Adrenal gland (tissue), 19 donors: ENCODE measurements at regions of chr5 and their contacts with region 1.

Region 1: DNA sequence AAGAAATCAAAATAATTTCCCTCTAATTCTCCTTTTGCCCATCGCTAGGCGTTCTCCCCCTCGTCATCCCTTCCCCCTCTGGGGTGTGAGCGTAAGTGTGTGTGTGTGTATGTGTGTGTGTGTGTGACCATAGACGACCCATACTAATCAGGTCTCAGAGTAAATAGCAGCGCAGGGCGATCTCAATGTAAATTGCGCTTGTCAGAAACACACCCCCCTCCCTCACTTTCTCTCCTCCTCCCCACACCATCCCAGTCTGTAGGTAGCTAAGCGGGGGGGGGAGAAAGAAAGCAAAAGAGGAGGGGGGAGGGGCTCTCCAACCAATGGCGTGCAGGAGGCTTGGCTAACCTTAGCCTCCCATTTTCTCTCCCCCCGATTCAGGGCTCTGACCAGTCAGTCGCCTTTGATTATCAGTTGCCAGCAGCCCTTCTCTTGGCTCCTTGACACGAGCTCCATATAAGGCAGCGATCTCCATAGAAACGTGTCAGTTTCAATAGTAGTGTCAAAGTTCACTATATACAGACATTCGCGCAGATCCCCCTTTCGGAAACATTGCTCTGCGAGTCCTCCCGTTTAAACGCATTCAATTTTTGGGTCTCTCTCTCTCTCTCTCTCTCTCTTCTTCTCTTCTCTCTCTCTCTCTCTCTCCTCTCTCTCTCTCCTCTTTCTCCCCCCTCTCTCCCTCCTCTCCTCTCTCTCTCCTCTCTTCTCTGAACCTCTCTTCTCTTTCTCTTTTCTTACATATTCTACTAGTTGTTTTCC is at the start of gene NR2F1:
- DNase-seq: peak; percentile 90 to 97 (median 95)
- H3K4me3 ChIP-seq: peak within 1 kb of the TSS in 3 of 4 donors; percentile 14 to 81 (median 55)
- H3K27ac ChIP-seq: peak within 1 kb of the TSS; percentile 17 to 93 (median 71)
- H3K4me1 ChIP-seq: peaks cover 0 to 30% of the 10 kb centered on the region in 2 donors
- H3K27me3 ChIP-seq: no peaks in the 10 kb centered on the region
- CTCF ChIP-seq: peak in 5 of 6 experiments; percentile 93 to 99 (median 97)
- POLR2A ChIP-seq: peak; percentile 32 to 54
- total RNA-seq, gene NR2F1: 29.1 to 195 (median 78.9) TPM

Region 2: DNA sequence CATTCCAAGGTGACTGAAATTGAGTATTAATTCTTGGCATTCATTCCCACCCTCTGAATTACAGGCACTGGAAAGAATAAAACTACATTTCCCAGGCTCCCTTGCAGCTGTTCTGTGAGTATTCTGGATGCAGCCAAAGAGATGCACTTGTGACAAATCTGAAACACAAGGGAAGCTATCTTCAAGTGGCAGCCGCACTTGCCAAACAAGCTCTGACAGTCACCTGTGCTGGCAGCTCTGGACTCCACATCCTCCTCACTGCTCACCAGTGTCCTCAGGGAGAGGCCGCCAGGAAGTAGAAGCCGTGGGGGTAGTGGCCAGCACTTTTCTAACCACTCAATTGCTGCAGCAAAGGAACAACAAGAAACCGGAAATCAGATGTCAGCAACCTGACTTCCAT is 276.9 kb before region 1 on chr5:
- intact Hi-C with region 1: no loop called
- DNase-seq: no peak
- H3K4me3 ChIP-seq: no peak overlapping the region
- H3K27ac ChIP-seq: no peak overlapping the region
- H3K4me1 ChIP-seq: no peaks in the 10 kb centered on the region
- H3K27me3 ChIP-seq: no peaks in the 10 kb centered on the region
- CTCF ChIP-seq: no peak
- POLR2A ChIP-seq: no peak

Region 3: GRCh38 chr5:93407454-93407853 is 175.4 kb before region 1 on chr5:
- intact Hi-C with region 1: loop called (anchors 10 kb)
- DNase-seq: no peak
- H3K4me3 ChIP-seq: no peak overlapping the region
- H3K27ac ChIP-seq: no peak overlapping the region
- H3K4me1 ChIP-seq: peaks cover 6 to 10% of the 10 kb centered on the region in 2 donors
- H3K27me3 ChIP-seq: no peaks in the 10 kb centered on the region
- CTCF ChIP-seq: no peak
- POLR2A ChIP-seq: no peak

Region 4: GRCh38 chr5:93512799-93513198 is 70.1 kb before region 1 on chr5:
- intact Hi-C with region 1: loop called in 1 of 2 experiments (anchors 5 kb)
- DNase-seq: no peak
- H3K4me3 ChIP-seq: no peak overlapping the region
- H3K27ac ChIP-seq: no peak overlapping the region
- H3K4me1 ChIP-seq: peaks cover 6 to 12% of the 10 kb centered on the region in 2 donors
- H3K27me3 ChIP-seq: no peaks in the 10 kb centered on the region
- CTCF ChIP-seq: no peak
- POLR2A ChIP-seq: no peak

Region 5: GRCh38 chr5:93789173-93790070 is 206.6 kb after region 1 on chr5:
- intact Hi-C with region 1: loop called in 1 of 2 experiments (anchors 10 kb)
- DNase-seq: no peak
- H3K4me3 ChIP-seq: no peak overlapping the region
- H3K27ac ChIP-seq: no peak overlapping the region
- H3K4me1 ChIP-seq: no peaks in the 10 kb centered on the region
- H3K27me3 ChIP-seq: no peaks in the 10 kb centered on the region
- CTCF ChIP-seq: no peak
- POLR2A ChIP-seq: no peak